ENCODE measurements at regions of chr5 and their contacts with region 1.

Region 1: GRCh38 chr5:73678322-73678740 is 52.3 kb downstream of the ARHGEF28 start:
- DNase-seq: no peak
- ATAC-seq: peak; percentile 61
- H3K4me3 ChIP-seq: no peak overlapping the region
- H3K27ac ChIP-seq: no peak overlapping the region
- H3K4me1 ChIP-seq: peaks cover 15% of the 10 kb centered on the region
- H3K27me3 ChIP-seq: no peaks in the 10 kb centered on the region
- CTCF ChIP-seq: no peak
- EP300 ChIP-seq: no peak
- POLR2A ChIP-seq: no peak
- RAD21 ChIP-seq: no peak

Region 2: GRCh38 chr5:73519531-73520283 is 158.6 kb before region 1 on chr5:
- CTCF ChIA-PET with region 1: no interaction called
- POLR2A ChIA-PET with region 1: no interaction called
- RAD21 ChIA-PET with region 1: no interaction called
- SMC1A ChIA-PET with region 1: no interaction called
- in situ Hi-C with region 1: no loop called
- intact Hi-C with region 1: no loop called
- DNase-seq: peak; percentile 48
- ATAC-seq: peak; percentile 100
- H3K4me3 ChIP-seq: no peak overlapping the region
- H3K27ac ChIP-seq: no peak overlapping the region
- H3K4me1 ChIP-seq: no peaks in the 10 kb centered on the region
- H3K27me3 ChIP-seq: no peaks in the 10 kb centered on the region
- CTCF ChIP-seq: peak; percentile 83 to 96 (median 92)
- EP300 ChIP-seq: no peak
- POLR2A ChIP-seq: no peak
- RAD21 ChIP-seq: peak; percentile 91

Region 3: GRCh38 chr5:73638344-73639095 is 39.8 kb before region 1 on chr5:
- CTCF ChIA-PET with region 1: no interaction called
- POLR2A ChIA-PET with region 1: no interaction called
- RAD21 ChIA-PET with region 1: interaction called, 10 read pairs
- SMC1A ChIA-PET with region 1: interaction called, 6 read pairs
- in situ Hi-C with region 1: no loop called
- intact Hi-C with region 1: no loop called
- DNase-seq: no peak
- ATAC-seq: 0 out of 3 replicates have a peak, but pooled peaks have one; percentile 29
- H3K4me3 ChIP-seq: no peak overlapping the region
- H3K27ac ChIP-seq: no peak overlapping the region
- H3K4me1 ChIP-seq: no peaks in the 10 kb centered on the region
- H3K27me3 ChIP-seq: no peaks in the 10 kb centered on the region
- CTCF ChIP-seq: no peak
- EP300 ChIP-seq: no peak
- POLR2A ChIP-seq: no peak
- RAD21 ChIP-seq: no peak

Region 4: DNA sequence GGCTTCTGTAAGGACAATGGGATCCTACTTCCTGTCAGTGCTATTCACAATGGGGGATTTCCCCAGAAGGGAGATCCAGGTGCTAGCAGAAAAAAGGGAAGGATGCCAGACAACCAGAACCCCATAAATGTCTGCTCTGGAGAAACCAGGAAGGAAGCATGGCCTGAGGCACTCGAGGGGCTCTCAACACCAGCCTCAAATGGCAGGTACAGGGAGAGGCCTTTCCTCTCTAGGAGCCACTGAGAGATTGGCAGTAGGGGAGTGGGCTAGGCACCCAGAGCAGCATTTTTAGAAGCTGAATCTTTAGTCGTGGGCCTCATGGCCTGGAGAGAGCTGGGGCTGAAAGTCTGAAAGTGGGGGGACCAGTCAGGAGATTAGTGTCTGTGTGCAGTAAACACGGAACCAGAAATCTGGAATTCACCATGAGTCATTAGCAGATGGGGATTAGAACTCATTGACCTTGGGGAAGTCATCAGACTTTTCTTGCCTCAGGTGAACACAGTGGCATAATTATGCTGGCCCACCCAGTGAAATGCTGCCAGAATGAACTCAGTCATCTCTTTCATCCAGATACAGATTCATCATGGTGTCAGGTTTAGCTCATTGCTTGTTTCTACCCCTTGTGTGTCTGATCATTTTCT is 24.0 kb before region 1 on chr5:
- CTCF ChIA-PET with region 1: interaction called, 7 read pairs
- POLR2A ChIA-PET with region 1: interaction called, 5 read pairs
- RAD21 ChIA-PET with region 1: interaction called, 7 read pairs
- SMC1A ChIA-PET with region 1: interaction called, 34 read pairs
- in situ Hi-C with region 1: no loop called
- intact Hi-C with region 1: no loop called
- DNase-seq: peak; percentile 65
- ATAC-seq: peak; percentile 88
- H3K4me3 ChIP-seq: no peak overlapping the region
- H3K27ac ChIP-seq: peak overlapping the region; percentile 59
- H3K4me1 ChIP-seq: peaks cover 23% of the 10 kb centered on the region
- H3K27me3 ChIP-seq: no peaks in the 10 kb centered on the region; a peak in 1 of 4 replicates
- CTCF ChIP-seq: no peak
- EP300 ChIP-seq: peak in 1 of 2 experiments; percentile 69; a peak in 1 of 4 replicates
- POLR2A ChIP-seq: no peak
- RAD21 ChIP-seq: no peak

Measured in GM12878 (cell line).